ENCODE measurements at regions of chr11 and their contacts with region 1.

Region 1: DNA sequence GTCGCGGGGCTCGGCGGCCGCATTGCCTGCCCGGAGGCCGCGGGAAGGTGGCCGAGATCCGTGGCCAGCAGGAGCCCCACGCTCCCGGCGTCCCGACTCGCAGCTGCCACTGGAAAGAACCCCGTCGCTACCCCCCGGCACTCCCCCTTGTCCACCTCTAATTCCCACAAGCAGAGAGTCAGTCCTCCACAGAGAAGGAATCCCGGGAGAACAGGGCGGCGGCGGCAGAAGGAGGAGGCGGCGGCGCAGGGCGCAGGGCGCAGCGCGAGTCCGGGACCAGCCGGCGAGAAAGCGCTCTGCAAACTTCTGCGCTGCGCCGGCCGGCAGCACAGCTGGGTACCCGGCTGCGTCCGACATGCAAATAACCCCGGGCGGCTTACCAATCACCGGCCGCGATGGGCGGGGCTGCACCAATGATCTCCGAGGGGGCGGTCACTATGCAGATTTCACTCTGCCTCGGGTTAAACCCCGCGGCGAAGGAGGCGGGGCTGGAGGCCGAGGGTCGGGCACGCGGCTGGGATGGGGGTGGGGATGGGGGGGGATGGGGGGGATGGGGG is at the start of gene ABTB2:
- DNase-seq: peak; percentile 98
- ATAC-seq: peak; percentile 94 to 96 (median 96)
- H3K4me3 ChIP-seq: peak within 1 kb of the TSS; percentile 26 to 88 (median 68)
- H3K27ac ChIP-seq: peak within 1 kb of the TSS; percentile 26 to 87 (median 80)
- H3K4me1 ChIP-seq: peaks cover 9 to 46% (median 37%) of the 10 kb centered on the region in 9 donors
- H3K27me3 ChIP-seq: peaks cover 0 to 38% (median 29%) of the 10 kb centered on the region in 7 donors
- CTCF ChIP-seq: no peak
- total RNA-seq, gene ABTB2: 7.3 to 19.1 (median 15.8) TPM

Region 2: GRCh38 chr11:33857933-33858371 is 499.8 kb before region 1 on chr11:
- intact Hi-C with region 1: loop called in 4 of 10 experiments (anchors 5 to 10 kb)
- DNase-seq: peak; percentile 80 to 81
- ATAC-seq: peak; percentile 79 to 95 (median 94)
- H3K4me3 ChIP-seq: no peak overlapping the region
- H3K27ac ChIP-seq: no peak overlapping the region
- H3K4me1 ChIP-seq: peaks cover 0 to 20% (median 0%) of the 10 kb centered on the region in 9 donors
- H3K27me3 ChIP-seq: peaks cover 0 to 10% (median 0%) of the 10 kb centered on the region in 7 donors
- CTCF ChIP-seq: peak; percentile 87 to 98 (median 94)

Region 3: GRCh38 chr11:33996498-33997454 is 361.0 kb before region 1 on chr11:
- intact Hi-C with region 1: loop called (anchors 1 to 5 kb)
- DNase-seq: peak; percentile 20 to 71
- ATAC-seq: peak; percentile 86 to 97 (median 94)
- H3K4me3 ChIP-seq: no peak overlapping the region
- H3K27ac ChIP-seq: no peak overlapping the region
- H3K4me1 ChIP-seq: peaks cover 0 to 9% (median 3%) of the 10 kb centered on the region in 9 donors
- H3K27me3 ChIP-seq: peaks cover 0 to 25% (median 15%) of the 10 kb centered on the region in 7 donors
- CTCF ChIP-seq: peak; percentile 69 to 91 (median 83)

Region 4: DNA sequence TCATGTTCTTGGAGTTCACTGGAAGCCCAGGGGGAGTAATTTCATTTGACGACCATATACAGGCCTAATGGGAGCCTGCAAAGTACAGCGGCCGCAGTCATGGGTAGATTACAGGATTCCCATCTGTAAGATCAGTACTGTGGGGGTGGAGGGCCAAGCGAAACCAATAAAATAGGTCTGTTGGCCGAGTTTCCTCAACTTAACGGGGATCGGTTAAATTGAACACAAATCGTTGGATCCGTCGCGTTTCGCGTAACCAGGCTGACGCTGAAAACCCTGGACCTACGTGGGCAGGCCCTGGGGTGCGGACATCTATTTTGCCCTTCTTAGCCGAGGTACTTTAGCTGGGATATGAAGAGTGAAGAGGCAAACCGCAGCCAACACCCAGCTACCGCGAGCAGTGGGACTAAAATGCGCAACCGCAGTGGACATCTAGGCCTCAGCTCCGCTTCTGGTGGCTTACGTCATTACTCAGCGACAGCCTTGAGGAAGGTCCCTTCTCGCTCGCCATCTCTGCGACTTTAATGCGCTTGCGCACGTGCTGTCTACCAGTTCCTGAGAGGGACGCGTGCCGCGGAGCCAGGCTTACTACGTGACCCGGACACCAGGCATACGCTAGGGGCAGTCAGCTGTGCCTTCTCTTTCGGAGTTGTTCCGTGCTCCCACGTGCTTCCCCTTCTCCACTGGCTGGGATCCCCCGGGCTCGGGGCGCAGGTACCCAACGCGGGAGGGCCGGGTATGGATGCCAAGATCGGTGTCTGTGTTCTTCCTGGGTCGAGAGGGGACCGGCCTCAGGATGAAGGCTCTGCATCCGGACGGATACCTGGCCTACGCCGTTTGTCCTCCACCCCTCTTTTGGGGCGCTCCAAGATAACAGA is 252.5 kb before region 1 on chr11 and contains the start of gene NAT10:
- intact Hi-C with region 1: loop called in 1 of 10 experiments (anchors 5 kb)
- DNase-seq: peak; percentile 93 to 98
- ATAC-seq: peak; percentile 95 to 99 (median 98)
- H3K4me3 ChIP-seq: peak within 1 kb of the TSS; percentile 61 to 93 (median 80)
- H3K27ac ChIP-seq: peak within 1 kb of the TSS; percentile 58 to 97 (median 94)
- H3K4me1 ChIP-seq: peaks cover 0 to 27% (median 20%) of the 10 kb centered on the region in 9 donors
- H3K27me3 ChIP-seq: no peaks in the 10 kb centered on the region
- CTCF ChIP-seq: peak in 3 of 9 donors; percentile 14 to 33 (median 28)
- total RNA-seq, gene NAT10: 16.6 to 26.4 (median 22.4) TPM

Region 5: DNA sequence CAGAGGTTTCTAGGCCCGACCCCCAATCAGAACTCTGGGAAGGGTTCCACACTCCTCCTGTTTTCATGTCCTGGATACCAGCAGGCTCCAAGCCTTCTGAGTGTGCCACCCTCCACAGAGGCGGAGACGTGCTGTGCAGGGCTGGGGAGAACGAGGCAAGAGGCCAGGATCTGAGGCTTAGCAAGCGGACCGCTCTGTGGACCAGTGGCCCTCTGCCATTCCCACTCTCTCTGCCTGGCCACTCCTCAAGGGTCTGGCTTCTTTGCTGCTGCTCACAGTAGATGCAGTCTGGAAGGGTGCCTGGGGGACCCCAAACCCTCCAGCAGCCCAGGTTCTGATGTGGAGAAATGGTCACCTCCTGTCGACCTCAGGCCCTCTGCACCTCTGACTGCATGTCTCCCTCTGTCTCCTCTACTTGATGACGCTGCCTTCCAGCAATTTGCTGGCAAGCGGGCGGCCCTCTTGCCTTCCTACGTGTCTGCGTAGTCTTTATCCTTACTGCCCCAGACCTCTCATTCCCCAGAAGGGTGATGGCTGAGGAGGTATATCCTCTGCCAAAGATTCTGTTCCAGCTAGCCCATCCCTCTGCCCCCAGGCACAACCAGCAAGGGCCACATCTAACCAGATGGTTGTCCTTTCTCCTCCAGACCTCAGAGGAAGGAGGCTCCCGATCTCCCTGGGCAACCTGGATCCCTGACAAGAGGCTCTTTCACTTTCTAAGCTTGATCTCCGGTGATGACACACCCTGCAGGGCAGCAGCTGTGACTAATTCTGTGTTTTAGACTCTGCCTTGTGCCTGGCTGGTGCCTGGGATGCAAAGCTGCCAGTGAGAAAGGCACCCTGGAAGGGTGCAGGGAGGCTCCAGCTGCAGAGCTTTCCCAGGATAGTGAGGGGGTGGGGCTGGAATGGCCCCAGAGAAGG is 165.0 kb before region 1 on chr11:
- intact Hi-C with region 1: loop called in 1 of 10 experiments (anchors 5 kb)
- DNase-seq: peak; percentile 51 to 53
- ATAC-seq: peak; percentile 56 to 87 (median 80)
- H3K4me3 ChIP-seq: no peak overlapping the region
- H3K27ac ChIP-seq: peak overlapping the region in 8 of 10 donors; percentile 27 to 69 (median 52)
- H3K4me1 ChIP-seq: peaks cover 0 to 42% (median 18%) of the 10 kb centered on the region in 9 donors
- H3K27me3 ChIP-seq: no peaks in the 10 kb centered on the region
- CTCF ChIP-seq: no peak

Region 6: GRCh38 chr11:34259087-34259486 is 98.7 kb before region 1 on chr11:
- intact Hi-C with region 1: loop called in 3 of 10 experiments (anchors 5 to 10 kb)
- DNase-seq: no peak
- ATAC-seq: no peak
- H3K4me3 ChIP-seq: no peak overlapping the region
- H3K27ac ChIP-seq: no peak overlapping the region
- H3K4me1 ChIP-seq: peaks cover 9 to 48% (median 25%) of the 10 kb centered on the region in 9 donors
- H3K27me3 ChIP-seq: no peaks in the 10 kb centered on the region
- CTCF ChIP-seq: no peak

Region 7: DNA sequence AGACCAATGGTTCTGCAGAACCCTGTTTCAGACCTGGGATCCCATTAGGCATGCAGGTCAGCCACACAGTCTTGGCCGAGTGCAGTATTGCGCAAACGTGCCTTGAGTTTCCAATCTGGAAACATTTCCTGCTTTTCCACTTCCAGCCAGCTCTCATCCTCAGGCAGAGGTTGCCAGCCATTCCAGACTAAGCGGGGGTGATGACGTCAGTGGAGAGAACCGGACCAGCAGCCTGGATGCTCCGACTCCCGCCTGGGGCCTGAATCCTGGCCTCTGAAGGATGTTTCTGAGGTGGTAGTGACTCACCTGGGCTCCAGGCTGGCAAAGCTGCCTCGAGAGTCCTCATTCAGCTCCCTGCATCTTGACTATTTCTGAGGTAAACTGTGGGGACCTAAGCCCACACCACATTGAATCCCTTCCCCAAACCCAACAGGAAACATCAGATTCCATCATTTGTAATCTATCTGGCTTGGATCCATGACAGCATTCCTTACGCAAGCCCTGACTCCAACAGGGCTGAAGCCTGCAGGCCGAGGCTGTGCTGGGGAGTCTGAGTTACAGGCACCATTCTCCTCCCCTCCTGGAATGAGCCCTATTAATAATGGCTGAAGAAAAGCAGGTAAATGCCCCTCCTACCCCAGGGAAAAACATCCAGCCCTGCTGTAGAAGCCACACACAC is 82.9 kb before region 1 on chr11:
- intact Hi-C with region 1: loop called in 1 of 10 experiments (anchors 5 kb)
- DNase-seq: peak; percentile 74 to 85
- ATAC-seq: peak; percentile 87 to 94 (median 89)
- H3K4me3 ChIP-seq: no peak overlapping the region
- H3K27ac ChIP-seq: peak overlapping the region in 8 of 10 donors; percentile 9 to 65 (median 60)
- H3K4me1 ChIP-seq: peaks cover 0 to 29% (median 14%) of the 10 kb centered on the region in 9 donors
- H3K27me3 ChIP-seq: no peaks in the 10 kb centered on the region
- CTCF ChIP-seq: no peak